ENCODE measurements at regions of chr12 and their contacts with region 1.

Region 1: GRCh38 chr12:53379389-53380103 is 430 bp upstream of the SP1 start:
- DNase-seq: peak; percentile 100
- ATAC-seq: peak; percentile 78
- H3K4me3 ChIP-seq: peak overlapping the region; percentile 63 to 71
- H3K27ac ChIP-seq: peak overlapping the region; percentile 89
- H3K4me1 ChIP-seq: peaks cover 28 to 51% of the 10 kb centered on the region in 2 experiments
- H3K27me3 ChIP-seq: no peaks in the 10 kb centered on the region
- CTCF ChIP-seq: no peak
- POLR2A ChIP-seq: no peak
- RAD21 ChIP-seq: no peak

Region 2: DNA sequence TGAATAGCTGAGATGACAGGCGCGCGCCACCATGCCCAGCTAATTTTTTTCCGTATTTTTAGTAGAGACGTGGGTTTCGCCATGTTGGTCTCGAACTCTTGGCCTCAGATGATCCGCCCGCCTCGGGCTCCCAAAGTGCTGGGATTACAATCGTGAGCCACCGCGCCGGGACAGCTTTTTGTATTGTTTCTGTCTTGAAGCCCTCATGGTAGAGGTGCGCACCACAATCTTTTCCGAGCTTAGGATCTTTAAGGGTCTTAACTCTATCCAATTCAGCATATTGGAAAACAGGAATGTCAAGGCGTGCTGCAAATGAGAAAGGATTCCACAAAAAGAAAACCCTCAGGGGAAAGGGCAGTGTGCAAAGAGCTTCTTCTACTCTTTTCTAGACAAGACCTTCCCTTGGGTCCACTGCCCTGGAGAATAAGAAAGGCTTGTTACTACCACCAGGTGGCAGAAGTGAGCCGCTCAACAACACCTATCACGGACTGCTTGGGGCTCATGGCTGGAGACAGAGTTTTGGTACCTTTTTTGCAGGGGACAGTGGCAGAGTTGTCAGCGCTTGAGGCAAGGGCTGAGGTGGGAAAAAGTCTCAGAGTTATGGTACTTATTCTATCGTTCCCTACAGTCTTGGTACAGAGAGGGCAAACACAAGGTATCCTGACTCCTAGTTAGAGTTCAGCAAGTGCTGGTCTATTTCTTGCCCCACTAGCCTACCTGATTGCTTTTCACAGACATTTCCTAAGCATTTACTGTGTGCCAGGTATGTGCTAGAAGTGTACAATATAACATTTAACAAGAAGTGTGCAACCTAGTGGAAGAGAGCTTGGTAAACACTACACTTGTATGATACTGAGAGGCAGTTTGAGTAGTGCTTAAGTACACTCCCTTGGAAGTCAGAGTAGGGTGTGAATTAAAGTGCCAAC is 27.0 kb before region 1 on chr12:
- CTCF ChIA-PET with region 1: interaction called, 99 read pairs
- POLR2A ChIA-PET with region 1: interaction called, 28 read pairs
- RAD21 ChIA-PET with region 1: interaction called, 6 to 11 read pairs
- intact Hi-C with region 1: loop called (anchors 1 kb)
- DNase-seq: peak; percentile 86
- ATAC-seq: peak; percentile 97
- H3K4me3 ChIP-seq: no peak overlapping the region
- H3K27ac ChIP-seq: peak overlapping the region; percentile 34; the same call in 1 of the 2 replicates
- H3K4me1 ChIP-seq: peaks cover 9 to 36% of the 10 kb centered on the region in 2 experiments; a peak in 3 of 4 replicates
- H3K27me3 ChIP-seq: no peaks in the 10 kb centered on the region
- CTCF ChIP-seq: peak; percentile 82 to 96 (median 89)
- POLR2A ChIP-seq: no peak
- RAD21 ChIP-seq: peak; percentile 99

Region 3: GRCh38 chr12:53365245-53365904 is 14.2 kb before region 1 on chr12:
- CTCF ChIA-PET with region 1: interaction called, 5 read pairs
- POLR2A ChIA-PET with region 1: interaction called, 32 read pairs
- RAD21 ChIA-PET with region 1: interaction called in 1 of 2 experiments, 3 read pairs
- intact Hi-C with region 1: no loop called
- DNase-seq: no peak
- ATAC-seq: peak; percentile 13; the same call in 1 of the 2 replicates
- H3K4me3 ChIP-seq: peak overlapping the region in 1 of 2 experiments; percentile 19; a peak in 2 of 4 replicates
- H3K27ac ChIP-seq: peak overlapping the region; percentile 98
- H3K4me1 ChIP-seq: peaks cover 60 to 79% of the 10 kb centered on the region in 2 experiments
- H3K27me3 ChIP-seq: no peaks in the 10 kb centered on the region
- CTCF ChIP-seq: no peak
- POLR2A ChIP-seq: no peak
- RAD21 ChIP-seq: no peak

Region 4: DNA sequence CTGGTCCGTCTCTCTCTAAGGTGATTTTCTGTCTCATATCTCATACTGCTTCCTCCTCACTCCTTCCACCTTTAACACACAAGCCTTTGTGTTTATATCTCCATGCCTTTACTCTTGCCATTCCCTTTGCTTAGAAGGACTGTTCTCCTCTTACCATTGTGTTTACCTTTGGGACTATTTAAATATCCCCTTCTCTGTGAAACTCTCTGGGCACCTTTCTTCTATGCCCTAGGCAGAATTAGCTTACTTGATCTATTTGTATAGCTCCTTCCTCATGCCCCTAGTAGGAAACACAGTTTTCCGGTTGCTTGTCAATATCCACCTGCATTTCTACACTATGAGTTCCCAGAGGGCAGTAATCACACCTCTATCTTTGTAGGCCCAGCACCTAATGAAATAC is 40.2 kb after region 1 on chr12:
- CTCF ChIA-PET with region 1: interaction called, 23 read pairs
- POLR2A ChIA-PET with region 1: interaction called, 20 read pairs
- RAD21 ChIA-PET with region 1: no interaction called
- intact Hi-C with region 1: loop called (anchors 2 kb)
- DNase-seq: no peak
- ATAC-seq: no peak
- H3K4me3 ChIP-seq: no peak overlapping the region; a peak in 1 of 4 replicates
- H3K27ac ChIP-seq: peak overlapping the region; percentile 95; the same call in 1 of the 2 replicates
- H3K4me1 ChIP-seq: peaks cover 16 to 26% of the 10 kb centered on the region in 2 experiments
- H3K27me3 ChIP-seq: no peaks in the 10 kb centered on the region
- CTCF ChIP-seq: no peak
- POLR2A ChIP-seq: no peak
- RAD21 ChIP-seq: no peak

Region 5: GRCh38 chr12:53451661-53452158 is 72.2 kb after region 1 on chr12 and contains the start of gene PCBP2:
- CTCF ChIA-PET with region 1: no interaction called
- POLR2A ChIA-PET with region 1: no interaction called
- RAD21 ChIA-PET with region 1: interaction called in 1 of 2 experiments, 4 read pairs
- intact Hi-C with region 1: loop called (anchors 5 kb)
- DNase-seq: peak; percentile 99
- ATAC-seq: peak; percentile 92
- H3K4me3 ChIP-seq: peak within 1 kb of the TSS; percentile 76 to 79
- H3K27ac ChIP-seq: peak within 1 kb of the TSS; percentile 96
- H3K4me1 ChIP-seq: peaks cover 0 to 14% of the 10 kb centered on the region in 2 experiments; a peak in 3 of 4 replicates
- H3K27me3 ChIP-seq: no peaks in the 10 kb centered on the region
- CTCF ChIP-seq: peak; percentile 72 to 88 (median 84)
- POLR2A ChIP-seq: no peak
- RAD21 ChIP-seq: 0 out of 2 replicates have a peak, but pooled peaks have one; percentile 4
- total RNA-seq, gene PCBP2: 856 TPM

Region 6: DNA sequence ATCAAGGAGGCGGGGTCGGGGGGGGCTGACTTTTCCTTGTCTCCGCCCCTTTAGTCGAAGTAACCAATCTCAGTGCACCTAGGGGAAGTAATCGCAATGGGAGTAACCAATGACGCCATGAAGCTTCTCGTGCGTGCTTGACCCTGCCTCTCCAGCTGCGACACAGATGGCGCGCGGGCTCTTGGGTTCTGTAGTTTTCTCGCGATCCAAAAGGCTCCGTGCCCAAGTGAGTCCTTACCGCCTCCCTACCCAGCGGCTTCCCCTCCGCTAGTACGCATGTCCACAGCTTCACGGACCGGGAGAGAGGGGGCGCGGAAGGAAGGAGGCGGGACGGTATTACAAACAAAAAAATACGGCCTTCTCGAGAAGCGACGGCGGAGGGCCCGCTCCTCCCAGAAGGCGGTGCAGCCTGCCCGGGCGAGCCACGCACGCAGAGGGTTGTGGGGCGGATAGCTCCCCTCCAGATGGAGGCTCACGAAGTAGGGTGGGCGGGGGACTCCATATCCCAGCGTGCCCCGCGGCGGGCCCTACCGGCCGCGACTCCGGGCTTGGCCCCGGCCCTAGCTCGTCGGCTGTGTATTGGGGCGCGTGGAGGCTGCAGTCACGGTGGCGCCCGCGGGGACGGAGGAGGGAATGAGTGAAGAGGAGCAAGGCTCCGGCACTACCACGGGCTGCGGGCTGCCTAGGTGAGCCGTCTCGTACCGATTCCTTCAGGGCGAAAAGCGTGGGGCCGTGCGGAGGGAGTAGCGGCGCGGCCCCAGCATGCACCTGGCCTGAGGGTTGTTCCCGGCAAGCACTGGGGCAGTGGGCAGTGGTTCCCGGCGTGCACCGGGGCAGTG is 121.4 kb after region 1 on chr12 and contains the start of gene TARBP2:
- CTCF ChIA-PET with region 1: no interaction called
- POLR2A ChIA-PET with region 1: interaction called, 11 read pairs
- RAD21 ChIA-PET with region 1: no interaction called
- intact Hi-C with region 1: no loop called
- DNase-seq: peak; percentile 99
- ATAC-seq: peak; percentile 78
- H3K4me3 ChIP-seq: peak within 1 kb of the TSS; percentile 75 to 87
- H3K27ac ChIP-seq: peak within 1 kb of the TSS; percentile 90
- H3K4me1 ChIP-seq: peaks cover 13 to 39% of the 10 kb centered on the region in 2 experiments
- H3K27me3 ChIP-seq: no peaks in the 10 kb centered on the region
- CTCF ChIP-seq: no peak
- POLR2A ChIP-seq: peak; percentile 76
- RAD21 ChIP-seq: no peak
- total RNA-seq, gene TARBP2: 40.1 TPM

Measured in HCT116 (cell line).